AG04449 (cell line): ENCODE measurements at regions of chr3 and their contacts with region 1.

Region 1: DNA sequence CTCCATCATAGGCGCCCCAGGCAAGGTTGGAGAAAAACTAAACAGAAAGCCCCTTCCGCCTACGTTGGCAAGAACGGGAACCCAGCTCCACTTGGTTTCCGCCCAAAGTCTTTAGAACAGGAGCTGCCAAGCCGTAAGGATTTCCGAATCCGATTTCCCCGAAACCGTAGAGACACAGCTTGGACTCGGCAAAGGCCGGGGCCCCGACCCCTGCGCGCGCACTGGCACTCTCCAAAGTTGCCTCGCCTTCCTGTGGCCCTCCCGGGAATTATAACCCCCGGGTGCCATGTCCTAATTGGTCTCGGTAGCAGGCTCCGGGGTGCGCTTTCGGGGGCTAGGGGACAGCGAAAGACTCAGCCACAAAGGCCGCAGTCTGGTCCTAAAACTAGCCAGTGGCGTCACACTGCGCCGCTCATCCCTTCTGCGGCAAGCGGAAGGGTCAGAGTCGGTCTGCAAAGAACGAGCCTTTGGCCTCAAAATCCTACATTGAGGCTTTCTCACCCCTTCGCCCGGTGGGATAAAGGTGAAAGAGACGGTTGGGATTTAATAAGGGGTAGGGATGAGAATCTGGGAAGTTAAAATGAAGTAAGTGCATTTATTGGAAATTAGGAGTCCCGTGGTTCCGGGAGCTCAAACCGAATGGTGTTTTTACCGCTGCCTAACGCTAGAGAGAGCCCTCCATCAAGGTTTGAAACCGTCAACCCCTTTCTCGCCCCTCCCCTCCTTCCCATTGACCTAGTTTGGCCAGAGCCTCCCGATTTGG is 6.8 kb downstream of the BCL6 start:
- DNase-seq: no peak
- H3K4me3 ChIP-seq: peak overlapping the region; percentile 94
- CTCF ChIP-seq: peak; percentile 76

Region 2: GRCh38 chr3:187352581-187353575 is 385.6 kb before region 1 on chr3:
- CTCF ChIA-PET with region 1: no interaction called
- POLR2A ChIA-PET with region 1: no interaction called
- DNase-seq: no peak
- H3K4me3 ChIP-seq: no peak overlapping the region
- CTCF ChIP-seq: no peak

Region 3: DNA sequence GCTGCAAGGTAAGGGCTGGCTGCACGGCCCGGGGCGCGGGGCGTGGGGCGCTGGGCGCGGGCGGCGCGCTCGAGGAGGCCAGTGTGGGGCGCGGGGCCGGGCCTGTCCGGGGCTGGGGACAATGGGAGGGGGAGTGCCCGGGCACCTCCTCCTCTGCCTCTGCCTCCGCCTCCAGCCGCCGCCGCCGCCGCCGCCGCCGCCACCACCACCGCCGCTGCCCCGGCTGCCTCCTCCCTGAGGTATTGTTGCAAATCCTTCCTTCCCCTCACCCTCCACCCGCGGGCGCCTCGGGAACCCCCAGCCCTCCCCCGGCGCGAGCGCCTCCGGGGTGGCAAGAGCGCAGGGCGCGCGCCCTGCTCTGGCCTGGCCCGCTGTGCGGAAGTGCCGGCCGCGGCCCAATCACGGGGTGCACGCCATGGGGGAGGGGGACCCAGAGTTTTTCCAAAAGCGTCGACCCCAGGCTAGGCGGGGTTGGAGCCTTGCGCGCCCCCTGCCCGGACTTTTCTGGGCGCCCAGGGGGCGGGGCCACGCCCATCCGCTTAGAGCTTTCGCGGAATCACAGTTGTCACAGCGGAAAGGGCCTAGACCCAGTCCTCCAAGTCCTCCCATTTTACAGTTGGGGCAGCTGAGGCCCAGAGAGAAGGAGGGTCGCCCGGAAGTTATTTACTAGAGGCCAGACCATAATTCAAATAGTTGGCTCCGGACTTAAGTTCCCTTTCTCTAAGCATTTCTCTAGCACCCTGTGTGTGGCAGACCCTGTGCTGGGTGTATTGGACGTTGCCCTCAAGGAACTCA is 415.7 kb after region 1 on chr3 and contains the start of gene LPP:
- CTCF ChIA-PET with region 1: interaction called, 26 read pairs
- POLR2A ChIA-PET with region 1: interaction called, 7 read pairs
- DNase-seq: no peak
- H3K4me3 ChIP-seq: peak within 1 kb of the TSS; percentile 79
- CTCF ChIP-seq: no peak

Region 4: GRCh38 chr3:188270423-188270972 is 532.0 kb after region 1 on chr3:
- CTCF ChIA-PET with region 1: interaction called, 61 read pairs
- POLR2A ChIA-PET with region 1: interaction called, 9 read pairs
- DNase-seq: peak; percentile 95
- H3K4me3 ChIP-seq: no peak overlapping the region
- CTCF ChIP-seq: no peak

Region 5: GRCh38 chr3:188309437-188310269 is 571.1 kb after region 1 on chr3:
- CTCF ChIA-PET with region 1: interaction called, 11 read pairs
- POLR2A ChIA-PET with region 1: no interaction called
- DNase-seq: no peak
- H3K4me3 ChIP-seq: no peak overlapping the region
- CTCF ChIP-seq: no peak

Region 6: GRCh38 chr3:188408831-188409230 is 670.3 kb after region 1 on chr3:
- CTCF ChIA-PET with region 1: interaction called, 13 read pairs
- POLR2A ChIA-PET with region 1: no interaction called
- DNase-seq: no peak
- H3K4me3 ChIP-seq: no peak overlapping the region
- CTCF ChIP-seq: no peak

Region 7: GRCh38 chr3:188624384-188624783 is 885.9 kb after region 1 on chr3:
- CTCF ChIA-PET with region 1: interaction called, 12 read pairs
- POLR2A ChIA-PET with region 1: no interaction called
- DNase-seq: no peak
- H3K4me3 ChIP-seq: no peak overlapping the region
- CTCF ChIP-seq: no peak

Region 8: DNA sequence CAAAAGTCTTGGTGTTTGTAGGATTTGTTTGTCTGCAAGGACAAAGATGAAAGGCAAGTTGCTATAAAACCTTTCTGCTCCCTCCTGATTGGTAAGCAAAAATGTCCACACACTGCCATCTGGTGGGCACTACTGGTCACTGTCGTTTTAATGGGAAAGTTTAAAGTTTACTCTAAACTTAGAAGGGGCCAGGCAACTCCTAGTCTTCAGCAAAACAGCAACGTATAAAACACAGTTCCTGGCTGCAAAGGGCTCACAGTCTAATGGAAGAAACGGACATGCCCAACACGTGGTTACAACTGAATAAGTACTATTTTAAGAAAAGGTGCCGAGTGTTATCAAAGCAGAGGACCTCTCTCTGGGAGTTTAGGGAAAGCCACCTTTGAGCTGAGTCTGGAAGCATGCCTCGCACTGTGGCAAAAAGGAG is 1409.6 kb after region 1 on chr3:
- CTCF ChIA-PET with region 1: interaction called, 21 read pairs
- POLR2A ChIA-PET with region 1: no interaction called
- DNase-seq: no peak
- H3K4me3 ChIP-seq: no peak overlapping the region
- CTCF ChIP-seq: peak; percentile 68